ENCODE measurements at regions of chr19 and their contacts with region 1.

Region 1: DNA sequence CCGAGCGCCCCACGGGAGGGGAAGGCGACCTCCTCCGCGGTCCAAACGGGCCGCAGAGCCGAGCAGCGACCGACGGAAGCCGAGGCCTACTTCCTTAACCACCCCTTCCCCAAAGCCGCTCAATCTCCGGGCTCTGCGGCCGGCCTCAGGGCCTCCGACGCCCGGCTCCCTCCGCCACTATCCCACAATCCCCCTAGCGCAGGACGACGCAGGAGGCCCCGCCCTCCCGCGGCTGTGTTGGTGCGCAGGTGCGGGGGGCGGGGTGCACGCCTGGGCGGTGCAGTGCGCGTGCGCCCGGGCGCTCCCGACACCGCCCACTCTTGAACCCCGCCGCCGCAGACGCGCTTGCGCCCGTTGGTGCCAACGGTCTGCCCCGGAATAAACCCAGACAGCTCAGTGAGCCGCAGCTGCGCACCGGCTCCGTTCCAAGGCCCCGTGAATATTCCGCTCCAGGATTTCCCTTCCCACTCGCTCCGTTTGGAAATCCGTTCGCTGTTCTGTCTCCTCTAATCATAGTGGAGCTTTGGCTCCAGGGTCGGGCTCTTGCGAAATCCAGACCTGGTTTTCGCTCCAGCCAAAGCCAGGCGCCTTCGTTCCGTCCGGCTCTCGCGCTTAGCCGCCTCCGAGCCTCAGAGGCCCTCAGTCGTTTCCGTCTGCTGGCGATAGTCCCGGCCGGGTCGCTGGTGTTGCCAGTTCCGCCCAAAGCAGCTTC is at the start of gene PPP6R1:
- DNase-seq: peak; percentile 87 to 99 (median 92)
- ATAC-seq: peak; percentile 76
- H3K4me3 ChIP-seq: peak within 1 kb of the TSS; percentile 76
- H3K4me3 Mint-ChIP-seq: peak within 1 kb of the TSS; percentile 91
- H3K27ac ChIP-seq: peak within 1 kb of the TSS; percentile 92 to 93
- H3K27ac Mint-ChIP-seq: peak within 1 kb of the TSS; percentile 97
- H3K4me1 ChIP-seq: peaks cover 52% of the 10 kb centered on the region
- H3K4me1 Mint-ChIP-seq: peaks cover 41% of the 10 kb centered on the region
- H3K27me3 ChIP-seq: no peaks in the 10 kb centered on the region
- H3K27me3 Mint-ChIP-seq: no peaks in the 10 kb centered on the region
- CTCF ChIP-seq: no peak
- total RNA-seq, gene PPP6R1: 172 to 182 TPM

Region 2: DNA sequence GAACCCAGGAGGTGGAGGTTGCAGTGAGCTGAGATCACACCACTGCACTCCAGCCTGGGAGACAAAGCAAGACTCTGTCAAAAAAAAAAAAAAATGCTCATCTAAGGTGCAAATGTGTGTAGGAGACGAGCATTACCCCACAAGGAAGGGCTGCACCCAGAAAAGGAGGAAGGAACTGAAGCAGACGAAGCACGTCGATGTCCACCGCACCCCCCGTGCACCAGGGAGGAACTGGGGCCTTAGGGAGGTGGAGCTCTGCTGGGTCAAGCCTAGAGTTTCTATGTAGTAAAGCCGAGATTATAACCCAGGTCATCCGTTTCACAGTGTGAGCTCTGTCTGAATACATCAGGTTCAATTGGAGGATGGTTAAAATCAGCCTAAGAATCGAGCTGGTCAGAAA is 1196.3 kb before region 1 on chr19:
- CTCF ChIA-PET with region 1: no interaction called
- POLR2A ChIA-PET with region 1: no interaction called
- intact Hi-C with region 1: no loop called
- DNase-seq: peak in 2 of 14 experiments; percentile 12 to 16
- ATAC-seq: no peak
- H3K4me3 ChIP-seq: no peak overlapping the region
- H3K4me3 Mint-ChIP-seq: no peak overlapping the region
- H3K27ac ChIP-seq: no peak overlapping the region
- H3K27ac Mint-ChIP-seq: no peak overlapping the region
- H3K4me1 ChIP-seq: no peaks in the 10 kb centered on the region
- H3K4me1 Mint-ChIP-seq: no peaks in the 10 kb centered on the region
- H3K27me3 ChIP-seq: peaks cover 3 to 5% of the 10 kb centered on the region in 2 experiments
- H3K27me3 Mint-ChIP-seq: peaks cover 28% of the 10 kb centered on the region
- CTCF ChIP-seq: no peak

Region 3: GRCh38 chr19:54916822-54917221 is 342.2 kb before region 1 on chr19:
- CTCF ChIA-PET with region 1: no interaction called
- POLR2A ChIA-PET with region 1: no interaction called
- intact Hi-C with region 1: no loop called
- DNase-seq: peak in 1 of 14 experiments; percentile 17
- ATAC-seq: no peak
- H3K4me3 ChIP-seq: no peak overlapping the region
- H3K4me3 Mint-ChIP-seq: no peak overlapping the region
- H3K27ac ChIP-seq: no peak overlapping the region
- H3K27ac Mint-ChIP-seq: no peak overlapping the region
- H3K4me1 ChIP-seq: no peaks in the 10 kb centered on the region
- H3K4me1 Mint-ChIP-seq: no peaks in the 10 kb centered on the region
- H3K27me3 ChIP-seq: peaks cover 4% of the 10 kb centered on the region in 2 experiments
- H3K27me3 Mint-ChIP-seq: peaks cover 41% of the 10 kb centered on the region
- CTCF ChIP-seq: no peak

Region 4: GRCh38 chr19:55117636-55118391 is 141.2 kb before region 1 on chr19 and contains the start of gene PPP1R12C:
- CTCF ChIA-PET with region 1: no interaction called
- POLR2A ChIA-PET with region 1: interaction called, 4 read pairs
- intact Hi-C with region 1: loop called in 1 of 2 experiments (anchors 2 kb)
- DNase-seq: peak; percentile 91 to 99 (median 97)
- ATAC-seq: peak; percentile 89
- H3K4me3 ChIP-seq: peak within 1 kb of the TSS; percentile 70
- H3K4me3 Mint-ChIP-seq: peak within 1 kb of the TSS; percentile 93
- H3K27ac ChIP-seq: peak within 1 kb of the TSS; percentile 27 to 44
- H3K27ac Mint-ChIP-seq: peak within 1 kb of the TSS; percentile 86
- H3K4me1 ChIP-seq: peaks cover 47% of the 10 kb centered on the region
- H3K4me1 Mint-ChIP-seq: peaks cover 37% of the 10 kb centered on the region
- H3K27me3 ChIP-seq: no peaks in the 10 kb centered on the region
- H3K27me3 Mint-ChIP-seq: no peaks in the 10 kb centered on the region
- CTCF ChIP-seq: no peak
- total RNA-seq, gene PPP1R12C: 123 to 136 TPM

Region 5: DNA sequence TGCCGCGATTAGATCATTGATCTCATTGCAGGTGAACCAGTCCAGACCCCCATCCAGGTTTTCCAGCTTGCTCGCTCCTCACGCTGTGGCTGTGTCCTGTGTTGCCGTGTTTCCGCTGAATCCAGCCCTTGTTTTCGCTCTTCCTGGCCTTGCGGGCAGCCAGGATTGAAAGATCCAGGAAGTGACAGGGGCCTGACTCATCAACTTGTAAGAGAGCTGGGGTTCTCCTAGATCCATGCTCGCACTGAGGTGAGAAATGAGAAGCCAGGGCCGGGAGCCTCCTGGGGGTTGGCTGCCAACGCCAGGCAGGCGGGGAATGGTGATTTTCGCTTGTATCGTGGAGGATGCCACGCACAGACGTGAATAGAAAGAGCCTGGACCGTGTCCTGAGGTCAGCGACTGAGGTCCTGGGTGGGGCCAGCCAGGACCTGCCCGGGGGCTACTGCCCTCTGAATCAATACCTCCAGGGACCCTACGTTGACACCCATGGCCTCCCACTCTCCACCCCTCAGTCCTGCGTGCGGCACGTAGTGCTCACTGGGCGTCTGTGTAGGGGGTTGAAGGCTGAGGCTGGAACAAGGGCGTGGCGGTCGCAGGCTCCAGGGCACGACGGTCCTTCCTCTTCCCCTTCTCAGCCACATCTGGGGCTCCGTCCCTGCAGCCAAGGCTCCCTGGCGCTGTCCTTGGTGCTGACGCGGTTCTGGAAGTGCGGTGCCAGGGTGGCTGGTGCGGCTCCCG is 42.4 kb before region 1 on chr19:
- CTCF ChIA-PET with region 1: no interaction called
- POLR2A ChIA-PET with region 1: interaction called, 3 read pairs
- intact Hi-C with region 1: loop called in 1 of 2 experiments (anchors 5 kb)
- DNase-seq: peak in 13 of 14 experiments; percentile 13 to 69 (median 35)
- ATAC-seq: peak; percentile 72
- H3K4me3 ChIP-seq: no peak overlapping the region
- H3K4me3 Mint-ChIP-seq: no peak overlapping the region
- H3K27ac ChIP-seq: no peak overlapping the region
- H3K27ac Mint-ChIP-seq: no peak overlapping the region
- H3K4me1 ChIP-seq: peaks cover 13% of the 10 kb centered on the region
- H3K4me1 Mint-ChIP-seq: peaks cover 11% of the 10 kb centered on the region
- H3K27me3 ChIP-seq: peaks cover 3 to 7% of the 10 kb centered on the region in 2 experiments
- H3K27me3 Mint-ChIP-seq: peaks cover 29% of the 10 kb centered on the region
- CTCF ChIP-seq: no peak

Region 6: DNA sequence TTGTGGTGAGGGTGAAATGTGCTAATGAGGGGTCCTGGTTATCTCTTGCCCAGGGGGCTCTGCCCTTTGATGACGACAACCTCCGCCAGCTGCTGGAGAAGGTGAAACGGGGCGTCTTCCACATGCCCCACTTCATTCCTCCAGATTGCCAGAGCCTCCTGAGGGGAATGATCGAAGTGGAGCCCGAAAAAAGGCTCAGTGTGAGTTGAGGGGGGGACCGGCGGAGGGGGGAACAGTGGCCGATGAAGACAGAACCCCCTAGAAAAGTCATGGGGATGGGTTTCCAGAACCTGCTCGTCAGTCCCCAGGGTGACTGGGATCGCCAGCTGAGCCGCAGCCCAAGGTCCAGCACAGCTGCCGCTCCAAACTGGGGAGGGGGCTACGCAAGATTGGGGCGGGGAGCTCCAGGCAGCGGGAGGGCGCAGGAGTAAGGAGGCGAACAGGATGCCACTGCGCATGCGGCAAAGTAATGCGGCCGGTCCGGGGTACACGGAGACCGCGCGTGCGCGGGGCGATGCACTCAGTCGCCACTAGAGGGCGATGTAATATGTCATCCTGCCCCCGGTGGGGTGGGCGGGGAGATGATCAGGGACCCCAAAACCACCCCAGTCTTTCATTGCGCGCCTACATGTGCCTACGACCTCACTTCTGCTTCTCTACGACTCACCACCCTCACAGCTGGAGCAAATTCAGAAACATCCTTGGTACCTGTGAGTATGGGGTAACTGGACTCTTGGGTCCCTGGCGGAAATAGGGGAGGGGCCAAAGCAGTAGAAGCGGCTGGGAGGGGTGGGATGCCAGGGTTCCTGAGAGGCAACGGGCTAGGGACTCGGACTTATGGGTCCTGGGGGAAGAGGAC is 42.7 kb after region 1 on chr19:
- CTCF ChIA-PET with region 1: interaction called, 10 read pairs
- POLR2A ChIA-PET with region 1: interaction called, 3 read pairs
- intact Hi-C with region 1: no loop called
- DNase-seq: peak; percentile 87 to 98 (median 94)
- ATAC-seq: peak; percentile 89
- H3K4me3 ChIP-seq: peak overlapping the region; percentile 37
- H3K4me3 Mint-ChIP-seq: peak overlapping the region; percentile 88
- H3K27ac ChIP-seq: no peak overlapping the region
- H3K27ac Mint-ChIP-seq: peak overlapping the region; percentile 61
- H3K4me1 ChIP-seq: peaks cover 21% of the 10 kb centered on the region
- H3K4me1 Mint-ChIP-seq: peaks cover 14% of the 10 kb centered on the region
- H3K27me3 ChIP-seq: no peaks in the 10 kb centered on the region
- H3K27me3 Mint-ChIP-seq: no peaks in the 10 kb centered on the region
- CTCF ChIP-seq: peak; percentile 95

Region 7: DNA sequence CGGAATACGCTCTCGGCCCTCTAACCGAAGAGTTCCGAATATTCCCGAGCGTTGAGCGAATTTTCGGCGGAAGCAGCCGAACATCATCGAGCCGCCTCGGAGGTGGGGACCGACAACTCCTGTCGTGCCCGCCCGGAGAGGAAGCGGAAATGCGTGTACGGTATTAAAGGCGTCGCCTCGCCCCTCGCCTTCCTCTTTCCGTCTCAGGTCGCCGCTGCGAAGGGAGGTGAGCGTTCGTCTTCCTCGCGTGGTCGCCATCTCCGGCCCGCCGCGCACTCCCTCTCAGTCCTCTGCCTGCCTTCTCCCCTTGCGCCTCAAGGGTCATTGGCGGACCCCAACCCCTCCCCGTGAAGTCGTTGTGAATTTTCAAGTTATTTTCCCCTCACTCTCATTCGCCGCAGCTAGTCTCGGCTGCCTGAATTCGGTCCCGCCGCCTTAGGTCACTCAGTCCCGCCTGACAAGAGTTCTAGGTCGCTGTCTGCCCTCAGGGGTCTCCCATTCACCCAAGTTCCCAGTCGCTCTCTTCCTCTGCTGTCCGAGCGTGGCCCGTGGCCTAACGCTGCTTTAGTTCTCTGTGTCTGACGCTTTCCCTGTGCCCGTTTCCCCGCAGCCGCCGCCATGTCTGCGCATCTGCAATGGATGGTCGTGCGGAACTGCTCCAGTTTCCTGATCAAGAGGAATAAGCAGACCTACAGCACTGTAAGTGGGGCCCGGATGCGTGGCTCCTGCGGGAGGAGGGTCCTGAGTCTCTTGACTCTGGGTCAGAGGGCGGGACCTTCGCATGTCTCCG is 127.0 kb after region 1 on chr19 and contains the start of gene RPL28:
- CTCF ChIA-PET with region 1: interaction called, 9 read pairs
- POLR2A ChIA-PET with region 1: interaction called, 18 read pairs
- intact Hi-C with region 1: loop called in 1 of 2 experiments (anchors 1 kb)
- DNase-seq: peak; percentile 96 to 99 (median 98)
- ATAC-seq: peak; percentile 78
- H3K4me3 ChIP-seq: peak within 1 kb of the TSS; percentile 99
- H3K4me3 Mint-ChIP-seq: peak within 1 kb of the TSS; percentile 100
- H3K27ac ChIP-seq: peak within 1 kb of the TSS; percentile 72 to 96
- H3K27ac Mint-ChIP-seq: peak within 1 kb of the TSS; percentile 97
- H3K4me1 ChIP-seq: peaks cover 73% of the 10 kb centered on the region
- H3K4me1 Mint-ChIP-seq: peaks cover 82% of the 10 kb centered on the region
- H3K27me3 ChIP-seq: no peaks in the 10 kb centered on the region
- H3K27me3 Mint-ChIP-seq: no peaks in the 10 kb centered on the region
- CTCF ChIP-seq: no peak
- total RNA-seq, gene RPL28: 3,995 to 4,178 TPM

Region 8: DNA sequence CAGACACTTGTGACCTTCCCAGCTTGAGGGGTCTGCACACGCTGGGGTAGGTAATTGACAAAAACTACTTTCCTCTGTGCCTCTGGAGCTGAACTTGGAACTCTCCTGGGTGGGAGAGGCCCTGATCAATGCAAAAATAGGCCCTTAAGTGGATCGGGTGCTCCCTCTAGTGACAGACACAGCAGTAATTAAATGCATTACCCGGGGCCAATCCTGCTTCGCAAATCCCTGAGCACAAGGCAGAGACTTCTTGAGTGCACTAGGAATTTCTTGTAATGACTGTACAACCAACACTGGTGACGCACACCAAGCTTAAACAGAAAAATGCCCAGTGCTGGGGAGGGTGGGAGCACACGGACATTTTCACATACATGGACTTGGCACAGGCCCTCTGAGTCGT is 159.2 kb after region 1 on chr19:
- CTCF ChIA-PET with region 1: interaction called, 4 read pairs
- POLR2A ChIA-PET with region 1: no interaction called
- intact Hi-C with region 1: loop called in 1 of 2 experiments (anchors 5 kb)
- DNase-seq: peak; percentile 25 to 80 (median 42)
- ATAC-seq: peak; percentile 60
- H3K4me3 ChIP-seq: no peak overlapping the region
- H3K4me3 Mint-ChIP-seq: no peak overlapping the region
- H3K27ac ChIP-seq: no peak overlapping the region
- H3K27ac Mint-ChIP-seq: no peak overlapping the region
- H3K4me1 ChIP-seq: peaks cover 31% of the 10 kb centered on the region
- H3K4me1 Mint-ChIP-seq: peaks cover 24% of the 10 kb centered on the region
- H3K27me3 ChIP-seq: no peaks in the 10 kb centered on the region
- H3K27me3 Mint-ChIP-seq: no peaks in the 10 kb centered on the region
- CTCF ChIP-seq: peak; percentile 79

Region 9: DNA sequence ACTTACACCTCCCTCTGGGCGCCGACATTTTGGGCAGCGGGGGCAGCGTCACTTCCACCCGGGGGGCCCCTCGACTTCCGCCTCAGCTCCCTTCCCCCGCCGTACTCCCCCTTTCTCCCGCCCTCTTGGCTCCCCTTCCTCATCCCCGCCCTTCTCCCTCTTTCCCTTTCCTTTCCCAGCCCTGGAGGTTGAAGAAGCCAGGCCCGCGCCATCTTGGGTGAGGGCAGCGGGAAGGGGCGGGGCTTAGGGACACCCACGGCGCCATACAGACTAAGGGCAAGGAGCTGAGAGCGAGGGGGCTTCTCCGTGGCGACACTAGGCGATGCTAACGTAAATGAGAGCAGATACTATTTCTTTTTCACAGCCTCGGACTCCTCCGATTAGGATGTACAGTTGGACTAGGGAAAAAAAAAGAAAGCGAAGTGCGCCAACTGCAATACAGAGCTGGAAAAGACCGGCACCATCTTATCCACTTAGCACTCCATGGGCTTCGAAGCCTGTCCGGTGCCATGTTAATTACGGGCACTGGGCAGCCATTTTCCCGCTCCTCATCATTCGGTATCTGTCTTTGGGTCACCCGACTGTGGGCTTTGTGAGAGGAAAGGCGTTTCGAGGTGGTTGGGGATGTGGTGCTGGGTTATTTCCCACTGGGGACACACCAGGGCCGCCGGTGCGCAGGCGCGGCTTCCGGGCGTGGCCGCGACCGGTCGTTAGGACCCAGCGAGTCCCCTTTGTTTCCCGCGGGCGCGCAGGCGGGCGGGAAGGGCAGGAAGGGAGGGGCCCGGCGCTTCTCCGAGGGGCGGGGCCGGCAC is 340.7 kb after region 1 on chr19 and contains the start of gene FIZ1:
- CTCF ChIA-PET with region 1: no interaction called
- POLR2A ChIA-PET with region 1: interaction called, 9 read pairs
- intact Hi-C with region 1: loop called in 1 of 2 experiments (anchors 10 kb)
- DNase-seq: peak; percentile 89 to 98 (median 94)
- ATAC-seq: peak; percentile 71
- H3K4me3 ChIP-seq: peak within 1 kb of the TSS; percentile 95
- H3K4me3 Mint-ChIP-seq: peak within 1 kb of the TSS; percentile 99
- H3K27ac ChIP-seq: peak within 1 kb of the TSS; percentile 95 to 97
- H3K27ac Mint-ChIP-seq: peak within 1 kb of the TSS; percentile 95
- H3K4me1 ChIP-seq: peaks cover 36% of the 10 kb centered on the region
- H3K4me1 Mint-ChIP-seq: peaks cover 26% of the 10 kb centered on the region
- H3K27me3 ChIP-seq: no peaks in the 10 kb centered on the region
- H3K27me3 Mint-ChIP-seq: no peaks in the 10 kb centered on the region
- CTCF ChIP-seq: no peak
- total RNA-seq, gene FIZ1: 5.5 to 7.3 TPM